BJ (cell line): ENCODE measurements at regions of chr13 and their contacts with region 1.

Region 1: GRCh38 chr13:97911311-97912128 is 42.0 kb upstream of the IPO5 start:
- DNase-seq: no peak
- H3K4me3 ChIP-seq: no peak overlapping the region
- H3K27me3 ChIP-seq: no peaks in the 10 kb centered on the region
- CTCF ChIP-seq: peak; percentile 36

Region 2: DNA sequence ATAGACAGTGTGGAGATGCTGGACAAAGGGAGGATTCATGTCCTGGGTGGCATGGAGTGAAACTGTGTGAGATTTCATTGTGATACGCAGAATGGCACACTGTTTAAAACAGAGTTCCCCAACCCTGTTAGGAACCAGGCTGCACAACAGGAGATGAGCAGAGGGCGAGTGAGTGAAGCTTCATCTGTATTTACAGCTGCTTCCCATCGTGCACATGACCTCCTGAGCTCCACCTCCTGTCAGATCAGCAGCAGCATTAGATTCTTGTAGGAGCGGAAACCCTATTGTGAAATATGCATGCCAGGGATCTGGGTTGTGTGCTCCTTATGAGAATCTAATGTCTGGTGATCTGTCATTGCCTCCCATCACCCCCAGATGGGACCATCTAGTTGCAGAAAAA is 405.0 kb before region 1 on chr13:
- CTCF ChIA-PET with region 1: no interaction called
- POLR2A ChIA-PET with region 1: no interaction called
- DNase-seq: no peak
- H3K4me3 ChIP-seq: no peak overlapping the region
- H3K27me3 ChIP-seq: no peaks in the 10 kb centered on the region; the same call in 1 of the 2 replicates
- CTCF ChIP-seq: no peak

Region 3: GRCh38 chr13:97855570-97856303 is 55.8 kb before region 1 on chr13:
- CTCF ChIA-PET with region 1: interaction called, 39 read pairs
- POLR2A ChIA-PET with region 1: no interaction called
- DNase-seq: peak; percentile 40
- H3K4me3 ChIP-seq: no peak overlapping the region
- H3K27me3 ChIP-seq: no peaks in the 10 kb centered on the region
- CTCF ChIP-seq: peak; percentile 80

Region 4: GRCh38 chr13:97892717-97893116 is 18.8 kb before region 1 on chr13:
- CTCF ChIA-PET with region 1: interaction called, 16 read pairs
- POLR2A ChIA-PET with region 1: no interaction called
- DNase-seq: no peak
- H3K4me3 ChIP-seq: no peak overlapping the region
- H3K27me3 ChIP-seq: no peaks in the 10 kb centered on the region
- CTCF ChIP-seq: no peak

Region 5: GRCh38 chr13:98025480-98026025 is 114.0 kb after region 1 on chr13:
- CTCF ChIA-PET with region 1: no interaction called
- POLR2A ChIA-PET with region 1: interaction called, 16 read pairs
- DNase-seq: no peak
- H3K4me3 ChIP-seq: no peak overlapping the region
- H3K27me3 ChIP-seq: no peaks in the 10 kb centered on the region
- CTCF ChIP-seq: no peak